Transverse colon (tissue), 4 donors: ENCODE measurements at regions of chr13 and their contacts with region 1.

Region 1: GRCh38 chr13:64553411-64554129 is 2676.6 kb downstream of the PCDH9 start:
- DNase-seq: no peak
- H3K4me3 ChIP-seq: no peak overlapping the region
- H3K27ac ChIP-seq: no peak overlapping the region
- H3K4me1 ChIP-seq: no peaks in the 10 kb centered on the region
- H3K27me3 ChIP-seq: no peaks in the 10 kb centered on the region
- CTCF ChIP-seq: no peak
- EP300 ChIP-seq: no peak
- POLR2A ChIP-seq: no peak

Region 2: GRCh38 chr13:64568748-64569147 is 15.2 kb after region 1 on chr13:
- in situ Hi-C with region 1: no loop called
- intact Hi-C with region 1: loop called (anchors 1 kb)
- DNase-seq: no peak
- H3K4me3 ChIP-seq: no peak overlapping the region
- H3K27ac ChIP-seq: no peak overlapping the region
- H3K4me1 ChIP-seq: no peaks in the 10 kb centered on the region
- H3K27me3 ChIP-seq: no peaks in the 10 kb centered on the region
- CTCF ChIP-seq: no peak
- EP300 ChIP-seq: no peak
- POLR2A ChIP-seq: no peak

Region 3: GRCh38 chr13:65378943-65379519 is 825.5 kb after region 1 on chr13:
- in situ Hi-C with region 1: no loop called
- intact Hi-C with region 1: no loop called
- DNase-seq: no peak
- H3K4me3 ChIP-seq: no peak overlapping the region
- H3K27ac ChIP-seq: no peak overlapping the region
- H3K4me1 ChIP-seq: no peaks in the 10 kb centered on the region
- H3K27me3 ChIP-seq: no peaks in the 10 kb centered on the region
- CTCF ChIP-seq: no peak
- EP300 ChIP-seq: no peak
- POLR2A ChIP-seq: no peak